ENCODE measurements at regions of chr14 and their contacts with region 1.

Region 1: GRCh38 chr14:80954687-80955299 is 628 bp upstream of the TSHR start:
- DNase-seq: peak; percentile 75
- H3K4me3 Mint-ChIP-seq: peak overlapping the region; percentile 70
- H3K27ac Mint-ChIP-seq: no peak overlapping the region
- H3K4me1 Mint-ChIP-seq: no peaks in the 10 kb centered on the region
- H3K27me3 Mint-ChIP-seq: peaks cover 76% of the 10 kb centered on the region
- CTCF ChIP-seq: peak; percentile 76

Region 2: GRCh38 chr14:80973931-80974641 is 19.3 kb after region 1 on chr14:
- CTCF ChIA-PET with region 1: interaction called, 21 read pairs
- POLR2A ChIA-PET with region 1: no interaction called
- intact Hi-C with region 1: no loop called
- DNase-seq: peak; percentile 16
- H3K4me3 Mint-ChIP-seq: no peak overlapping the region
- H3K27ac Mint-ChIP-seq: no peak overlapping the region
- H3K4me1 Mint-ChIP-seq: no peaks in the 10 kb centered on the region
- H3K27me3 Mint-ChIP-seq: peaks cover 50% of the 10 kb centered on the region
- CTCF ChIP-seq: no peak

Region 3: GRCh38 chr14:81164167-81164774 is 209.5 kb after region 1 on chr14:
- CTCF ChIA-PET with region 1: interaction called, 16 read pairs
- POLR2A ChIA-PET with region 1: no interaction called
- intact Hi-C with region 1: loop called (anchors 1 kb)
- DNase-seq: peak; percentile 87
- H3K4me3 Mint-ChIP-seq: no peak overlapping the region
- H3K27ac Mint-ChIP-seq: no peak overlapping the region
- H3K4me1 Mint-ChIP-seq: peaks cover 14% of the 10 kb centered on the region
- H3K27me3 Mint-ChIP-seq: no peaks in the 10 kb centered on the region
- CTCF ChIP-seq: peak; percentile 69

Region 4: GRCh38 chr14:81211844-81212243 is 257.1 kb after region 1 on chr14:
- CTCF ChIA-PET with region 1: interaction called, 3 read pairs
- POLR2A ChIA-PET with region 1: no interaction called
- intact Hi-C with region 1: loop called (anchors 5 kb)
- DNase-seq: peak; percentile 23
- H3K4me3 Mint-ChIP-seq: no peak overlapping the region
- H3K27ac Mint-ChIP-seq: no peak overlapping the region
- H3K4me1 Mint-ChIP-seq: no peaks in the 10 kb centered on the region
- H3K27me3 Mint-ChIP-seq: no peaks in the 10 kb centered on the region
- CTCF ChIP-seq: no peak